ENCODE measurements at regions of chr11 and their contacts with region 1.

Region 1: GRCh38 chr11:66336234-66337102 is at the start of gene RIN1:
- DNase-seq: peak; percentile 71
- H3K4me3 ChIP-seq: peak within 1 kb of the TSS; percentile 80
- CTCF ChIP-seq: peak; percentile 29

Region 2: GRCh38 chr11:66188580-66188979 is 147.9 kb before region 1 on chr11:
- CTCF ChIA-PET with region 1: no interaction called
- POLR2A ChIA-PET with region 1: no interaction called
- DNase-seq: no peak
- H3K4me3 ChIP-seq: no peak overlapping the region
- CTCF ChIP-seq: no peak

Region 3: GRCh38 chr11:66288671-66289547 is 47.6 kb before region 1 on chr11 and contains the start of gene YIF1A:
- CTCF ChIA-PET with region 1: interaction called, 8 read pairs
- POLR2A ChIA-PET with region 1: interaction called, 24 read pairs
- DNase-seq: peak; percentile 98
- H3K4me3 ChIP-seq: peak within 1 kb of the TSS; percentile 82
- CTCF ChIP-seq: no peak

Region 4: DNA sequence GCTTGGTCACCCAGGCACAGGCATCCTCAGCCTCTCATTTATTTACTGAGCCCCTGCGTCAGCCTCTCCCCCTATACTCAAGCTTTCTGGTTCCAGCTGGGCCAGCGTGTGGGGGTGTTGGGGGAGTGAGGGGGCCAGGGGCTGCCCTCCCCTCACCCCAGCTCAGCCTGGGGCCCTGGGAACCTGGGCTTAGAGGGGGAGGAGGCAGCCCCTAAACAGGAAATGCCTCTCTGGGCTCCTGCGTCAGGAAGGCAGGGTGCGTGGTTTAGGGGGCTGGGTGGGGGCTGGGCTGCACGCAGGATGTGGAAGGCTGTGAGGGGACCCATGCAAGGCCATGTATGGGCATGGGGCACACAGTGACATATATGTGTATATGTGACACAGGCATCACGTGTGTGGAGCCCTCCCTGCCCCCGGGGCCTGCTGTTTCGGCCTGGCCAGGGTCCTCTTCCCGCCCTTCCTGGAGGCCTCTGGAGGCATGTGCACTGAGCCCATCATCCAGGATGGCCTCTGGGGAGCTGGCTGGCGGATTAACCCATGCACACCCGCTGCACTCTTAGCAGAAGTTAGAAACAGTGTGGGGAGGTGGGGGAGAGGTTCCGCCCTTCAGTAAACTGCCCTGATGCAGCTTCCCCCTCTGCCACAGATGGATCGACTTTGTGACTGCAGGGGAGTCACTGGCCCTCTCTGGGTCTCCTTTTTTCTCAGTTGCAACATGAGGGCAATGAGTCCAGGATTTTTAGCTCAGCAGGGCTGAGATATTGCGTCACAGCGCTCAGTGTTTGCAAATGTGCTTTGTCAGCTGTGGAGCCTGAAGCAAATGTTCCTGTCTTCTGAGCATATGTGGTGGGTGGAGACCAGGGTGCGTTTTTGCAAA is 18.5 kb before region 1 on chr11:
- CTCF ChIA-PET with region 1: interaction called, 231 read pairs
- POLR2A ChIA-PET with region 1: interaction called, 106 read pairs
- DNase-seq: no peak
- H3K4me3 ChIP-seq: peak overlapping the region; percentile 36
- CTCF ChIP-seq: no peak

Region 5: GRCh38 chr11:66371627-66372415 is 35.4 kb after region 1 on chr11 and contains the start of gene SLC29A2:
- CTCF ChIA-PET with region 1: no interaction called
- POLR2A ChIA-PET with region 1: no interaction called
- DNase-seq: no peak
- H3K4me3 ChIP-seq: peak within 1 kb of the TSS; percentile 61
- CTCF ChIP-seq: no peak

Region 6: GRCh38 chr11:66448523-66448922 is 112.1 kb after region 1 on chr11:
- CTCF ChIA-PET with region 1: no interaction called
- POLR2A ChIA-PET with region 1: no interaction called
- DNase-seq: no peak
- H3K4me3 ChIP-seq: no peak overlapping the region
- CTCF ChIP-seq: no peak

Measured in AG04449 (cell line).